ENCODE measurements at regions of chr5 and their contacts with region 1.

Region 1: GRCh38 chr5:140220032-140220697 is 45.2 kb downstream of the CYSTM1 start:
- DNase-seq: no peak
- H3K4me3 ChIP-seq: no peak overlapping the region
- H3K4me3 Mint-ChIP-seq: no peak overlapping the region
- H3K27ac ChIP-seq: no peak overlapping the region
- H3K27ac Mint-ChIP-seq: peak overlapping the region in 2 of 7 donors; percentile 37 to 47
- H3K4me1 ChIP-seq: peaks cover 31 to 54% of the 10 kb centered on the region in 2 donors
- H3K4me1 Mint-ChIP-seq: peaks cover 64% of the 10 kb centered on the region
- H3K27me3 ChIP-seq: peaks cover 5 to 9% of the 10 kb centered on the region in 2 donors
- H3K27me3 Mint-ChIP-seq: peaks cover 6 to 20% (median 9%) of the 10 kb centered on the region in 3 donors
- CTCF ChIP-seq: no peak

Region 2: GRCh38 chr5:140189977-140190871 is 29.9 kb before region 1 on chr5:
- intact Hi-C with region 1: loop called in 1 of 2 experiments (anchors 5 kb)
- DNase-seq: no peak
- H3K4me3 ChIP-seq: no peak overlapping the region
- H3K4me3 Mint-ChIP-seq: no peak overlapping the region
- H3K27ac ChIP-seq: no peak overlapping the region
- H3K27ac Mint-ChIP-seq: no peak overlapping the region
- H3K4me1 ChIP-seq: peaks cover 14 to 25% of the 10 kb centered on the region in 2 donors
- H3K4me1 Mint-ChIP-seq: peaks cover 9% of the 10 kb centered on the region
- H3K27me3 ChIP-seq: no peaks in the 10 kb centered on the region
- H3K27me3 Mint-ChIP-seq: no peaks in the 10 kb centered on the region
- CTCF ChIP-seq: no peak

Measured in CD14-positive monocyte (primary cell).